PC-9 (cell line): ENCODE measurements at regions of chr2 and their contacts with region 1.

Region 1: GRCh38 chr2:168961450-168962229 is 60.5 kb downstream of the G6PC2 start:
- DNase-seq: peak; percentile 17 to 63
- H3K4me3 ChIP-seq: no peak overlapping the region
- H3K27ac ChIP-seq: no peak overlapping the region
- H3K4me1 ChIP-seq: peaks cover 36% of the 10 kb centered on the region
- H3K27me3 ChIP-seq: no peaks in the 10 kb centered on the region
- CTCF ChIP-seq: peak; percentile 85

Region 2: GRCh38 chr2:168920504-168921157 is 41.0 kb before region 1 on chr2:
- CTCF ChIA-PET with region 1: no interaction called
- POLR2A ChIA-PET with region 1: no interaction called
- intact Hi-C with region 1: no loop called
- DNase-seq: no peak
- H3K4me3 ChIP-seq: no peak overlapping the region
- H3K27ac ChIP-seq: no peak overlapping the region
- H3K4me1 ChIP-seq: no peaks in the 10 kb centered on the region
- H3K27me3 ChIP-seq: no peaks in the 10 kb centered on the region
- CTCF ChIP-seq: peak; percentile 73

Region 3: GRCh38 chr2:169038338-169038757 is 76.7 kb after region 1 on chr2:
- CTCF ChIA-PET with region 1: no interaction called
- POLR2A ChIA-PET with region 1: interaction called, 3 read pairs
- intact Hi-C with region 1: loop called (anchors 2 kb)
- DNase-seq: peak; percentile 41 to 92
- H3K4me3 ChIP-seq: no peak overlapping the region
- H3K27ac ChIP-seq: peak overlapping the region; percentile 87
- H3K4me1 ChIP-seq: peaks cover 36% of the 10 kb centered on the region
- H3K27me3 ChIP-seq: no peaks in the 10 kb centered on the region
- CTCF ChIP-seq: no peak

Region 4: DNA sequence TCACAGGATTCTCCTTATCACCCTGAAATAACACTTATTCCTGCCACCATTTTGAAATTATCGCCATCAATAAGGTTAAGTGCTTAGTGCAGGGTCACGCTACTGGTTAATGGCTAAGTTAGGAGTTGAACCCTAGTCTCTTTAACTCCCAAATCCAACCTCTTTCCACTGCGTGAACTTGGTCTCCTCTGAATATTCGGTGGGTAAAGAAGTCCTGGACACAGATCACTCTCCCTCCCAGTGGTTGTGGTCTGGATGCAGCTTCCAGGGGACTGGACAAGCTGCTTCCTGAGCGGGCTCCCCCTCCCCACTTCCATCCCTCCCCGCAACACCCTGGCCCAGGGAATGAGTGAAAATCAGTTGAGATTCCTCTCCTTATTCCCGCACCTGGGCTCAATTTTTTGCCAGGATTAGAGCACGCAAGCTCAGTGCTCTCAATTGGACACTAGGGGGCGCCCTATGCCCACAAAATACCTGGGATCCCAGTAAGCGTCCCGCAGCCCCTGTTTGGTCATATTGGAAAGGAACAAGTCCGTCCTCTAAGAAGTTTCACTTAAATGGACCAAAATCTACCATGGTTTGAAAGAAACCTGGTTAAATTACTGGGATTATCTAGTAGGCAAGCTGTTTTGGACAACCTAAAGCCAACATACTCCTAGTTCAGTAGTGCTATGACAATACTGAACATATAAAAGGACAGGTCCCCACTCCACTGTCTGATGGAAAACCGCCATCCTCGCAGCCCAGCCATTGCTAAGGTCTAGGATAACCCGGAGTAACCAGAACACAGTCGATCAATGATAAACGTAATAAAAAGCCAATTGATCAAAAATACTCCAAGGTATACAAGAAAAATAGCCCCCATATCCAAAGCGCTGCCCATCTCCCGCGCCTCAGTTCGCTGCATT is 148.1 kb after region 1 on chr2:
- CTCF ChIA-PET with region 1: no interaction called
- POLR2A ChIA-PET with region 1: no interaction called
- intact Hi-C with region 1: loop called (anchors 5 kb)
- DNase-seq: peak; percentile 54 to 55
- H3K4me3 ChIP-seq: no peak overlapping the region
- H3K27ac ChIP-seq: no peak overlapping the region
- H3K4me1 ChIP-seq: peaks cover 9% of the 10 kb centered on the region; the same call in 1 of the 2 replicates
- H3K27me3 ChIP-seq: no peaks in the 10 kb centered on the region
- CTCF ChIP-seq: peak; percentile 85

Region 5: GRCh38 chr2:169141713-169142352 is 180.2 kb after region 1 on chr2:
- CTCF ChIA-PET with region 1: no interaction called
- POLR2A ChIA-PET with region 1: no interaction called
- intact Hi-C with region 1: loop called (anchors 2 kb)
- DNase-seq: peak in 1 of 2 experiments; percentile 28
- H3K4me3 ChIP-seq: no peak overlapping the region
- H3K27ac ChIP-seq: no peak overlapping the region
- H3K4me1 ChIP-seq: no peaks in the 10 kb centered on the region
- H3K27me3 ChIP-seq: no peaks in the 10 kb centered on the region
- CTCF ChIP-seq: peak; percentile 79

Region 6: GRCh38 chr2:169324581-169325260 is 363.1 kb after region 1 on chr2:
- CTCF ChIA-PET with region 1: no interaction called
- POLR2A ChIA-PET with region 1: no interaction called
- intact Hi-C with region 1: no loop called
- DNase-seq: no peak
- H3K4me3 ChIP-seq: no peak overlapping the region
- H3K27ac ChIP-seq: no peak overlapping the region
- H3K4me1 ChIP-seq: no peaks in the 10 kb centered on the region
- H3K27me3 ChIP-seq: no peaks in the 10 kb centered on the region
- CTCF ChIP-seq: no peak